ENCODE measurements at regions of chr2 and their contacts with region 1.

Region 1: DNA sequence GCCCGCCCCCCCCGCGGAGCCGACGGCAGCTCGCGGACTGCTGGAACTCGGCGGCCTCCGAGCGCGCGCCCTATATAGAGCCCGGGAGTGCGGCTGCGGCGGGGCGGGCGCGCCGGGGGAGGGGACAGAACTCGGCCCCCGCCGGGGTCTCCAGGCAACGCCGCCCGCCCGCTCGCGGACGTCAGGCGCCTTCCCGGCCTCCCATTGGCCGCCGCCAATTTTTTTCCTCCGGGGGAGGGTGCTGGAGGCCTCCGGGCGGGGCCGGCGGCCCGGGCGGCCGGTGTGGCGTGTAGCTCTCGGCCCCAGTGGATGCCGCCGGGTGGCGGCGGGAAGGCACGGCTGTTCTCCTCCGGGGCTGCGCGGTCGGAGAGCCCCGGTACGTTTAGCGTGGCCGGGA is at the start of gene ZFP36L2:
- DNase-seq: no peak
- ATAC-seq: peak; percentile 69
- H3K4me3 ChIP-seq: peak within 1 kb of the TSS; percentile 84
- H3K27ac ChIP-seq: peak within 1 kb of the TSS; percentile 97
- H3K4me1 ChIP-seq: peaks cover 22% of the 10 kb centered on the region
- H3K27me3 ChIP-seq: no peaks in the 10 kb centered on the region
- CTCF ChIP-seq: no peak
- EP300 ChIP-seq: peak in 1 of 2 experiments; percentile 40; a peak in 1 of 4 replicates
- POLR2A ChIP-seq: no peak
- RAD21 ChIP-seq: no peak
- polyA plus RNA-seq, gene ZFP36L2: 25.5 to 43.3 TPM

Region 2: GRCh38 chr2:42954227-42954962 is 272.2 kb before region 1 on chr2:
- CTCF ChIA-PET with region 1: interaction called, 17 read pairs
- POLR2A ChIA-PET with region 1: interaction called, 3 read pairs
- RAD21 ChIA-PET with region 1: interaction called, 17 read pairs
- SMC1A ChIA-PET with region 1: no interaction called
- in situ Hi-C with region 1: loop called (anchors 5 kb)
- intact Hi-C with region 1: no loop called
- DNase-seq: no peak
- ATAC-seq: no peak
- H3K4me3 ChIP-seq: no peak overlapping the region
- H3K27ac ChIP-seq: no peak overlapping the region
- H3K4me1 ChIP-seq: no peaks in the 10 kb centered on the region
- H3K27me3 ChIP-seq: no peaks in the 10 kb centered on the region; a peak in 1 of 4 replicates
- CTCF ChIP-seq: no peak
- EP300 ChIP-seq: no peak
- POLR2A ChIP-seq: no peak
- RAD21 ChIP-seq: no peak

Region 3: DNA sequence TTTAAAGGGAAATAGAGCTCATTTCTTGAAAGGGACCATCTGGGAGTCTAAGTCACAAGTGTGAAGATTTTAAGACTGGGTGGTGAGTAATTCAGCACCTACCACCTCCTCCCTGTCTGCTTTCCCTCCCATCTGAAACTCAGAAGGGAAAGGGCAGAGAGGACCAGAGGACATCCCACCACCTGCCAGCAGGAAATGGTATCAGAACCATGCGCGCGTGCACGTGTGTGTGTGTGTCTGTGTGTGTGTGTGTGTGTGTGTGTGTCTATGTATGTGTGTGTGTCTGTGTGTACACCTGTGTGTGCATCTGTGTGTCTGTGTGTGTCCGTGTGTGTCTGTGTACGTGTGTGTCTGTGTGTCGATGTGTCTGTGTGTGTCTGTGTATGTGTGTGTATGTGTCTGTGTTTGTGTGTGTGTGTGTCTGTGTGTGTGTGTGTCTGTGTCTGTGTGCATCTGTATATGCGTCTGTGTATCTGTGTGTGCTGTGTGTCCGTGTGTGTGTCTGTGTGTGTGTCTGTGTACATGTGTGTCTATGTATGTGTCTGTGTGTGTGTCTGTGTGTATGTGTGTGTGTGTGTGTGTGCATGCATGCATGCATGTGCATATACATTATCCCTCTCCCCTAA is 77.0 kb before region 1 on chr2:
- CTCF ChIA-PET with region 1: interaction called, 12 read pairs
- POLR2A ChIA-PET with region 1: interaction called, 3 read pairs
- RAD21 ChIA-PET with region 1: interaction called, 4 read pairs
- SMC1A ChIA-PET with region 1: interaction called, 8 read pairs
- in situ Hi-C with region 1: no loop called
- intact Hi-C with region 1: no loop called
- DNase-seq: no peak
- ATAC-seq: peak; percentile 85
- H3K4me3 ChIP-seq: no peak overlapping the region
- H3K27ac ChIP-seq: no peak overlapping the region
- H3K4me1 ChIP-seq: peaks cover 11% of the 10 kb centered on the region
- H3K27me3 ChIP-seq: no peaks in the 10 kb centered on the region
- CTCF ChIP-seq: no peak
- EP300 ChIP-seq: no peak
- POLR2A ChIP-seq: no peak
- RAD21 ChIP-seq: no peak

Region 4: DNA sequence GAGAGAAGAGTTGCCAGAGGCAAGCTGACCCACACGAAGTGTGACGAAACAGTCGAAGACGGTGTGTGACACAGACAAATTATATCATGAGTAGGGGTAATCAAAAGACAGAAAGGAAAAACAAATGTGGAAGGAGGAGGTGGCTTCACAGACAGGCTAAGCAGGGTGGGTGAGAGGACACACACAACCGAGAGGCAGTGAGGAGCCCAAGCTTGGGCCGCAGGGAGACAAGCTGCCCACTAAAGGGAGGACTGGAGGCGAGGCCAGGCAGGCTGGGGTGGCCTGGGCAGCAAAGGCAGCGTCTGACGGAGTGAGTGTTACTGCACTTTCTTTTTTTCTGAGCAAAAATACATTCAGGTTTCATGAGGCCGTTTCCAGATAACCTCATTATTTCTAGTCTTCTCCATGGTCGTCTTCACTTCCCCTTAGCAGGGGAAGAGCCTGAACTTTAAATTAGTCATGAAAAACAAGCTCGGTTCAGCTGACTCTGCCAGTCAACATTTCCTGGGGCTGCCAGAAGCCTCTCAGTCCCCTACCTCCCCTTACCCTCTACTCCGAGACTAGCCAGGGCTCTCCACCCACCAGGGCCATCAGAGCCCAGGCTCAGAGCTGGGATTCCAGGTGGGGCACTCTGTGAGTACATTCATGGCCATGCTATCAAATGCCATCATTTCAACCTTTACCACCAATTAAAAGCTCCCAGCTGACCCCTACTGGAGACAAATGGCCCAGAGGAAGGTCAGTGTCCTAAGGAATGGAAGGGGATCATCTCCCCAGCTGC is 13.6 kb after region 1 on chr2:
- CTCF ChIA-PET with region 1: interaction called, 43 read pairs
- POLR2A ChIA-PET with region 1: interaction called, 3 read pairs
- RAD21 ChIA-PET with region 1: interaction called, 19 read pairs
- SMC1A ChIA-PET with region 1: interaction called, 17 read pairs
- in situ Hi-C with region 1: no loop called
- intact Hi-C with region 1: no loop called
- DNase-seq: no peak
- ATAC-seq: peak; percentile 76
- H3K4me3 ChIP-seq: no peak overlapping the region
- H3K27ac ChIP-seq: peak overlapping the region; percentile 70
- H3K4me1 ChIP-seq: peaks cover 17% of the 10 kb centered on the region
- H3K27me3 ChIP-seq: no peaks in the 10 kb centered on the region
- CTCF ChIP-seq: peak; percentile 16 to 26 (median 22); a peak in 3 of 6 replicates
- EP300 ChIP-seq: no peak
- POLR2A ChIP-seq: no peak
- RAD21 ChIP-seq: peak; percentile 15; the same call in 1 of the 2 replicates

Region 5: DNA sequence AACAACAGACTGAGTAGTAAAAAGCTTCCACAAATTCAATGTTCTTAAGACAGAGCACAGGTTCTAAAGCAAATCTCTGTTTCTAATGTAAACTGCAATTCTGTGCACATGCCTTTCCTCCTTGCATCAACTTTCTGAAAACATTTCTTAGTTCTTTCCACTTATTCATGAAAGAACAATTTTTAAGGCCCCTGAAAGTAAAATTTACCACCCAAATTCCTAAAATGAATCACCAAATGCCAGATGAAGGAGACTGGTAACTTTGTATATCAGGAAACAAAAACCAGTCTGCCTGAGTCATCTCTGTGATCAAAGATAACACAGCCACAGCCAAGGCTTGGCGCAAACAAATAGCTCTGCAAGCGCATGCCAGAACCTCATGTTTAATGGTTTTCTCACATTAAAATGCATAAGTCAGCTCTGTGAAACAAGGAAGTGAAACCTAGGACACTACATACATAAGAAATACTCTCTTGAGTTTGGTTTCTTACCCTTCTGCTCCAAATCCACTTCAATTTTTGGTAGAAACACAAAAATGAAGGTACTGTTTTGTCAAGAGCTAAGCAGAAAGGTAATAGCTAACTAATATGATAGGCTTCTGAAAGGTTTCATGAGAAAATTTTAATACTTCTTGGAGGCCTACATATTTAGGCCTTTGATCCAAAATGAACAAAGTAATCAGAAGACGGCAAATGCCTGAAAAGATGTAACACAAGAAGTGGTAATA is 199.9 kb after region 1 on chr2:
- CTCF ChIA-PET with region 1: interaction called, 19 read pairs
- POLR2A ChIA-PET with region 1: interaction called, 3 read pairs
- RAD21 ChIA-PET with region 1: interaction called, 51 read pairs
- SMC1A ChIA-PET with region 1: interaction called, 16 read pairs
- in situ Hi-C with region 1: no loop called
- intact Hi-C with region 1: loop called (anchors 2 kb)
- DNase-seq: peak; percentile 96
- ATAC-seq: peak; percentile 83
- H3K4me3 ChIP-seq: no peak overlapping the region
- H3K27ac ChIP-seq: peak overlapping the region; percentile 94
- H3K4me1 ChIP-seq: peaks cover 44% of the 10 kb centered on the region
- H3K27me3 ChIP-seq: no peaks in the 10 kb centered on the region
- CTCF ChIP-seq: no peak
- EP300 ChIP-seq: peak; percentile 96 to 98
- POLR2A ChIP-seq: 0 out of 2 replicates have a peak, but pooled peaks have one; percentile 27
- RAD21 ChIP-seq: no peak; the same call in 1 of the 2 replicates

Region 6: GRCh38 chr2:43495727-43496126 is 269.2 kb after region 1 on chr2:
- CTCF ChIA-PET with region 1: interaction called, 10 read pairs
- POLR2A ChIA-PET with region 1: no interaction called
- RAD21 ChIA-PET with region 1: no interaction called
- SMC1A ChIA-PET with region 1: no interaction called
- in situ Hi-C with region 1: no loop called
- intact Hi-C with region 1: no loop called
- DNase-seq: no peak
- ATAC-seq: no peak
- H3K4me3 ChIP-seq: no peak overlapping the region
- H3K27ac ChIP-seq: no peak overlapping the region
- H3K4me1 ChIP-seq: no peaks in the 10 kb centered on the region
- H3K27me3 ChIP-seq: no peaks in the 10 kb centered on the region
- CTCF ChIP-seq: no peak
- EP300 ChIP-seq: no peak
- POLR2A ChIP-seq: no peak
- RAD21 ChIP-seq: no peak

Region 7: DNA sequence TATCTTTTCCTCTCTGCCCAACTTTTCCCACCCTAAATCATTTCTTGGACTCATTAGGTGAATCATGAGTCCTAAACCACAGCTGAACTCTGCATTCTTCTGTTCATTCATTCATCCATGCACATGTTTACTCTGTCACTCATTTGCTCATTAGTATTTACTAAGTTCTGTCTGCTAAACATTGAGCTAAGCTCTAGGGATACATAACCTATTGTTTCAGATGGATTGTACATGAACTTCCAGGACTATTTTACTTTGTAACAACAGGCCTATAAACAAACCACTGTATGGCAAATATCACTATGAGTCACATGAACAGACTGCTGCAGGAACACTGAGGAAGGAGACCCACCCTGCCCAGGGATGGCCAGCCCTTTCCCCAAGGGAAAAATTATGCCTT is 532.6 kb after region 1 on chr2:
- CTCF ChIA-PET with region 1: no interaction called
- POLR2A ChIA-PET with region 1: no interaction called
- RAD21 ChIA-PET with region 1: no interaction called
- SMC1A ChIA-PET with region 1: no interaction called
- in situ Hi-C with region 1: no loop called
- intact Hi-C with region 1: no loop called
- DNase-seq: no peak
- ATAC-seq: no peak
- H3K4me3 ChIP-seq: no peak overlapping the region
- H3K27ac ChIP-seq: no peak overlapping the region
- H3K4me1 ChIP-seq: no peaks in the 10 kb centered on the region
- H3K27me3 ChIP-seq: no peaks in the 10 kb centered on the region
- CTCF ChIP-seq: no peak
- EP300 ChIP-seq: no peak
- POLR2A ChIP-seq: no peak
- RAD21 ChIP-seq: no peak